Heart left ventricle (tissue), 16 donors: ENCODE measurements at regions of chr5 and their contacts with region 1.

Region 1: GRCh38 chr5:54646356-54647101 is 129.0 kb downstream of the SNX18 start:
- DNase-seq: peak; percentile 78 to 92 (median 92)
- ATAC-seq: peak; percentile 91 to 97 (median 95)
- H3K4me3 ChIP-seq: peak overlapping the region in 6 of 12 donors; percentile 3 to 29 (median 8)
- H3K27ac ChIP-seq: peak overlapping the region; percentile 65 to 96 (median 76)
- H3K4me1 ChIP-seq: peaks cover 0 to 48% (median 23%) of the 10 kb centered on the region in 12 donors
- H3K27me3 ChIP-seq: no peaks in the 10 kb centered on the region
- CTCF ChIP-seq: peak in 2 of 12 donors; percentile 5 to 10
- POLR2A ChIP-seq: no peak

Region 2: GRCh38 chr5:54534191-54535004 is 112.1 kb before region 1 on chr5:
- intact Hi-C with region 1: loop called in 4 of 10 experiments (anchors 5 to 10 kb)
- DNase-seq: no peak
- ATAC-seq: peak in 3 of 4 donors; percentile 19 to 41 (median 39)
- H3K4me3 ChIP-seq: peak overlapping the region in 6 of 12 donors; percentile 6 to 14 (median 10)
- H3K27ac ChIP-seq: peak overlapping the region; percentile 60 to 89 (median 80)
- H3K4me1 ChIP-seq: peaks cover 6 to 87% (median 61%) of the 10 kb centered on the region in 12 donors
- H3K27me3 ChIP-seq: no peaks in the 10 kb centered on the region
- CTCF ChIP-seq: no peak
- POLR2A ChIP-seq: no peak